Mammary epithelial cell (primary cell): ENCODE measurements at regions of chr1 and their contacts with region 1.

Region 1: GRCh38 chr1:243917177-243917862 is 67.3 kb upstream of the AKT3 start:
- DNase-seq: peak; percentile 50
- H3K4me3 ChIP-seq: peak overlapping the region; percentile 24 to 47 (median 44)
- H3K27ac ChIP-seq: no peak overlapping the region
- H3K4me1 ChIP-seq: peaks cover 11% of the 10 kb centered on the region
- H3K27me3 ChIP-seq: no peaks in the 10 kb centered on the region
- CTCF ChIP-seq: no peak

Region 2: DNA sequence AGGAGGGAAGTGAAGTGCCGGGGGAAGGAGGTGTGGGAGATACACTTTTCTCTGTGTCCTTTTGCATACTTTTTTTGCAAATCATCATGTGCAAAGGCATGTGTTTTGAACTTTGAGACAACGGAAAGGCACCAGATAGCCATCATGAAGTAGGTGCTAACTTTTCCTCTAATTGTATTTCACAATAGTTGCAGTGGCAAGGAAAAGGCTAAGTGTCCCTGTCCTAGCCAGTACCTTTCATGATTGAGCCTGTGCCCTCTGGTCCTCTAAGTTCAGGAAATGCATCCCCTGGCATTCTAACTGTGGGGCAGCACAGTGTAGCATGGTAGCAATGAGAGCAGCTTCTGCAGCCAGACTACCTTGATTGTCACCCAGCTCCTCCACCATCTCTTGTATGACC is 348.2 kb after region 1 on chr1:
- CTCF ChIA-PET with region 1: no interaction called
- dilution Hi-C with region 1: no loop called
- in situ Hi-C with region 1: no loop called
- intact Hi-C with region 1: loop called (anchors 2 kb)
- DNase-seq: no peak
- H3K4me3 ChIP-seq: no peak overlapping the region
- H3K27ac ChIP-seq: no peak overlapping the region
- H3K4me1 ChIP-seq: no peaks in the 10 kb centered on the region
- H3K27me3 ChIP-seq: no peaks in the 10 kb centered on the region
- CTCF ChIP-seq: no peak